ENCODE measurements at regions of chr1 and their contacts with region 1.

Region 1: GRCh38 chr1:171781176-171781875 is at the start of gene METTL13:
- H3K4me3 Mint-ChIP-seq: peak within 1 kb of the TSS; percentile 88
- H3K27ac Mint-ChIP-seq: peak within 1 kb of the TSS; percentile 93
- H3K4me1 Mint-ChIP-seq: peaks cover 38% of the 10 kb centered on the region
- H3K27me3 Mint-ChIP-seq: no peaks in the 10 kb centered on the region

Region 2: GRCh38 chr1:171485375-171486047 is 295.8 kb before region 1 on chr1 and contains the start of gene PRRC2C:
- intact Hi-C with region 1: loop called (anchors 5 kb)
- H3K4me3 Mint-ChIP-seq: peak within 1 kb of the TSS; percentile 93
- H3K27ac Mint-ChIP-seq: peak within 1 kb of the TSS; percentile 96
- H3K4me1 Mint-ChIP-seq: peaks cover 32% of the 10 kb centered on the region
- H3K27me3 Mint-ChIP-seq: no peaks in the 10 kb centered on the region

Region 3: DNA sequence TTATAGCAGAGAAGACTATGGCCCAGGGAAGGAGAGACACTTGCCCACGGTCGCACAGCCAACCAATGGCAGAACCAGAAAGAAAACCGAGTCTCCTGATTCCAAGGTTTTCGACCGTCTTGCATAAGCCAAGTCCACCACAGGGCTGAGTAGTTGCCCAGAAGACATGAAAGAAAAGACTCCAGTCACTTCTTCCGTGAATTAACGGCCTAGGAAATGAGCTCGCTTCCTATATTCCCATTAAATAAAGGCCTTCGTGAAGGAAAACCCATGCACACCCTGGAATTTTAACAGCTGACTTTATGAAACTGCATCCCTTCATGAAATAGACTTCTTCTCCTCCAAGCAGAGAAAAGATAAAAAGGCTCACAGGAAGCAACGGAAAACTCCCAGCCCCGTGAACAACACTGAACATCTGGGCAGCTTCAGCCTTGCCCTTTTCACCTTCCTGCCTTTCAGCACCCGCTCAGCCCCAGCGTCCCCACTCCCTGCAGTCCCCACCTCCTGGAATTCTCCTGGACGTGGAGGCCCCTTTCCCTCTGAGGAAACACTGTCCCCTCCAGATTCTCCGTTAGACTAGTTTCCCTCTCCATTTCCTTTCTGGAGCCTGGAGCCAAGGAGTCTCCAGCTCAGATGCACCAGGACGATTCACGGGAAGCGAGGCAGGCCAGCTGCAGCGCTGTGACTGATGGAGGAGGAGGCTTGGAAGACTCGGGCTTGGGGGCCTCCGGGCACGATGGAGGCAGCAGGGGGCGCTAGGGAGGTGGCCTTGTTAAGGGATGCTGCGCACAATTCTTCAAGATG is 126.2 kb before region 1 on chr1:
- intact Hi-C with region 1: loop called (anchors 5 kb)
- H3K4me3 Mint-ChIP-seq: no peak overlapping the region
- H3K27ac Mint-ChIP-seq: no peak overlapping the region
- H3K4me1 Mint-ChIP-seq: peaks cover 9% of the 10 kb centered on the region
- H3K27me3 Mint-ChIP-seq: peaks cover 11% of the 10 kb centered on the region

Region 4: DNA sequence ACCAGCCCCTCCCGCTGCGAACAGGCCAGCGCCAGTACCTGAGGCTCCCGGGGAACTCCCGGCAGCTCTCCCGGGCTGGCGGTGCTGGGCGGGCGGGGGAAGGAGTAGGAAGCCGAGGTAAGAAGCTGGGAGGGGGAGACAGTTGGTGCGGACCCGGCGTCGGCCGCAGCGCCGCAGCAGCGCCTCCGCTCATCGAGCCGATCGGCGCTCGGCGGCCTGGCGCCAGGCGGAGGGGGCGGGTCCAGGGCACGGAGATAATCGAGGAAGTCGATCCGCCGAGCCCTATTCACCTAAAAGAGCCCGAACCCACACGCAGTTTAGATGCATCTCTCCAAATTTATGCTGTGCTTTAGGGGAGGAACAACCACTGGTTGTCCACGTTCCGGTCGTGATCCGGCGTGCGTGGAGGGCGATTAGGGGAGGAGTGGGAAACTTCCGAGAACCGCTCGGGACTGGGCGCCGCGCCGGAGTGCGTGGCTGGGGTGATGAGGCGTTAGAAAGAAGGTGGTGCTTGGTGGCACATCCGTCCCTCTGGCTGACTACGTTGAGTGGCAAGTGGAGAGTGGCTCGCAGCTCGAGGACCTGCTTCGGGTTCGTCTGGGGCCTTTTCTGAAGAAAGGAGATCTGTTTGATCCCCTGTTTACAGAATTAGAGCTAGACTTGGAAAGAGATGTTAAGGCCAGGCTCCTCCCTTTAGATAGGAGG is 39.3 kb before region 1 on chr1 and contains the start of gene VAMP4:
- intact Hi-C with region 1: loop called (anchors 1 kb)
- H3K4me3 Mint-ChIP-seq: peak within 1 kb of the TSS; percentile 98
- H3K27ac Mint-ChIP-seq: peak within 1 kb of the TSS; percentile 93
- H3K4me1 Mint-ChIP-seq: peaks cover 43% of the 10 kb centered on the region
- H3K27me3 Mint-ChIP-seq: no peaks in the 10 kb centered on the region

Region 5: GRCh38 chr1:171841050-171841940 is 60.0 kb after region 1 on chr1 and contains the start of gene DNM3:
- intact Hi-C with region 1: loop called (anchors 2 kb)
- H3K4me3 Mint-ChIP-seq: peak within 1 kb of the TSS; percentile 91
- H3K27ac Mint-ChIP-seq: peak within 1 kb of the TSS; percentile 68
- H3K4me1 Mint-ChIP-seq: peaks cover 26% of the 10 kb centered on the region
- H3K27me3 Mint-ChIP-seq: peaks cover 26% of the 10 kb centered on the region

Region 6: DNA sequence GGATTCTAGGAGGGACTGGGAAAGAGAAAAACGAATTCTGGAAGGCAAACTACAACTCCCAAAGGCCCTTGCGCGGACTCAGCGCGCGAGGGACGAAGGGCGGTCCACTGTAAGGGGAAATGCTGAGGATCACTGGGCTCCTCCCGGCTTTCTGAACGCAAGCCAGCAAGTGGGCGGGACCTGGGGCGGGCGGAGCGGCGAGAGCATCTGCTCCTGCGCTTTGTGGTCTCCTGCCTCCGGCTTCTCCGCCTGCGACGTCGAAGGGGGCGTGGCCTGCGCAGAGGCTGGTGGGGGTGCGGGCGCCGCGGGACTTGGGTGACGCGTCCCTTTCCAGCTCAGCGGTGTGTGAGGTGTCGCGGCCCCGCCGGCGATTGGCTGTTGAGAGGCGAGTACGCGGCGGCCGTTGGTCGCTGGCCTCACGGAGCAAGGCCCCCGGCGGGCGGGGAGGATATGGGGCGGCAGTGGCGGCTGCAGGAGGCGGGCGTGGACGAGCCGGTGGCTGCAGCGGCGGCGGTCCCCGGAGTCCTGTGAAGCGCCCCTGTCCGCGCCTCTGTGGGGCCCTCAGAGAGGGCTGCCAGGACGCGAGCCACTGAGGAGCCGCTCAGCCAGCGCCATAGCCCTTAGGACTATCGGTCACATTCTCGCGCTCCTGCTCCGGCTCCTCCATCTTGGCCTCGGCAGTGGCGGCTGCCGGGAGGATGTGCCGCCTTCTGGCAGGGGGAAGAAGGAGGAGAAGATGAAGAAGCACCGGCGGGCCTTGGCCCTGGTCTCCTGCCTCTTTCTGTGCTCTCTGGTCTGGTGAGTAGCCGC is 751.6 kb after region 1 on chr1 and contains the start of gene SUCO:
- intact Hi-C with region 1: loop called (anchors 5 kb)
- H3K4me3 Mint-ChIP-seq: peak within 1 kb of the TSS; percentile 93
- H3K27ac Mint-ChIP-seq: peak within 1 kb of the TSS; percentile 98
- H3K4me1 Mint-ChIP-seq: peaks cover 37% of the 10 kb centered on the region
- H3K27me3 Mint-ChIP-seq: no peaks in the 10 kb centered on the region

Measured in dendritic cell treated with granulocyte-macrophage colony-stimulating factor and Interleukin-4, amounts not matched to agents 40 ng/mL and 50 ng/mL, for 4 days (primary cell).